ENCODE measurements at regions of chr11 and their contacts with region 1.

Region 1: DNA sequence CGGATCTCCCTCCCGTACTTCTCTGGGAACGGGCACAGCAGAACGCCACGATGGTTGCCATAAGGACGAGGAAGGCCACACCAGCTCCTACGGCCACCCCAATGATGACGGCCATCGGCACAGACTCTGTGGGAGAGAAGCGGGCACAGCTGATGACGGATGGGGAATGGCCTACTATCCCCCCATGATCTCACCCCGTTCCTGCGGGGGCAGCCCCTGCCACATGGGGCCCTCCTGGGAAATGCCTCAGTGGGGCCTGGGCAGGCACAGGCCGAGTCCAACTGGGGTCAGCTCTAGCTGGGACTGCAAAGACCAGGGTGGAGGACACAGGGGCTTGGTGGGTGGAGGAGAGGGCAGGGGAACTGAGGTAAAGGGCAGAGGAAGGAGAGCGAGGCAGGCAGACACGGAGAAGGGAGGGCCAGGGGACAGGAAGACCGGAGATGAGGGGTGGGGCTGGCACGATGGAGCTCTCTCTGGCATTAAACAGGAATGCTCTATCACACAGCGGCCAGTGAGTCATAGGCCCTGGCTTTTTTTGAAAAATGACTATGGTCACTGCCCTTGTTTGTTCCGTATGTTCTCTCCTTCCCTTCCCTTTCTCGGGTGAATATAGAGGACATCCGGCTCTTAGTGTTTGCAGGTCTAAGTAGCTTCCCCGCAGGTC is 76.0 kb downstream of the ST3GAL4 start:
- DNase-seq: peak in 3 of 4 donors; percentile 29 to 44 (median 44)
- ATAC-seq: peak; percentile 63
- H3K4me3 ChIP-seq: no peak overlapping the region
- H3K27ac ChIP-seq: peak overlapping the region in 1 of 4 donors; percentile 12
- H3K4me1 ChIP-seq: no peaks in the 10 kb centered on the region
- H3K27me3 ChIP-seq: no peaks in the 10 kb centered on the region
- CTCF ChIP-seq: no peak
- POLR2A ChIP-seq: no peak

Region 2: GRCh38 chr11:126282736-126283591 is 148.6 kb before region 1 on chr11 and contains the start of gene TIRAP:
- intact Hi-C with region 1: no loop called
- DNase-seq: peak; percentile 70 to 75 (median 73)
- ATAC-seq: peak; percentile 89
- H3K4me3 ChIP-seq: peak within 1 kb of the TSS; percentile 8 to 60
- H3K27ac ChIP-seq: peak within 1 kb of the TSS; percentile 80 to 94 (median 86)
- H3K4me1 ChIP-seq: peaks cover 26% of the 10 kb centered on the region
- H3K27me3 ChIP-seq: no peaks in the 10 kb centered on the region
- CTCF ChIP-seq: peak in 5 of 7 experiments; percentile 7 to 50 (median 36)
- POLR2A ChIP-seq: peak; percentile 70 to 84 (median 80)
- total RNA-seq, gene TIRAP: 8.3 to 13.5 TPM

Region 3: DNA sequence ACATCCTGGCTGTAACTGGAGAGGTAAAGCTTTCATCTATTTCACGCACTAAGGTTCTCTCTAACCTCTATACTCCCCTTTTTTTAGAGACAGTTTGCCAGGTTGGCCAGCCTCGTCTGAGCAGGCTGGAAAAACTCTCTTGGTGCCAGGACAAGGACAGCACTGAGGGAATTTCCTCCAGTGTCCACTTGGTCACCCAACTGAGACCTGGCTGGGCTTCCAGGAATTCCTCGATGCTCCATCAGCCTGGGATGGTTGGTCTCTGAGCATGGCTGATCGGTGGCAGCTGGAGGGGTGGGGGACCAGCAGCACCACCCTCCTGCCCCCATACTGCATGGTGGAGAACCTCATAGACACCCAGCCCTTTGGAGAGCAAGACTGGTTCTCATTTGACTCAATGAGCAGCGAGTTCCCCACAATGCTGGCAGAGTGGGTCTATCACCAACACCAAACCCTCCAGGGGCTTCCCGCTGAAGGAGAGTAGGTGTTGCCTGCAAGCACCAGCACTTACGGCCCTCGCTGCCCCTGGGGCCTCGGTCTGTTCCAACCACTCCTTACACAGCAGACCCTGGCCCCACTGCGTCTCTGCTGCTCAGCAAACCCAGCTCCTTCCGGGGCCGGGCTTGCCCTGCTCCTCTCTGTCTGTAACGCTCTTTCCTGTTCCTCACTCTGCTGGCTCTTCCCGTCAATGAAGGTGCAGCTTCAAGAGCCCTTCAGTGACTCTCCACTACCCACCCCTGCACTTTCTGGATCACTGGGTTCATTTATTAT is 46.2 kb after region 1 on chr11:
- intact Hi-C with region 1: loop called (anchors 5 kb)
- DNase-seq: no peak
- ATAC-seq: no peak
- H3K4me3 ChIP-seq: no peak overlapping the region
- H3K27ac ChIP-seq: no peak overlapping the region
- H3K4me1 ChIP-seq: peaks cover 19% of the 10 kb centered on the region
- H3K27me3 ChIP-seq: no peaks in the 10 kb centered on the region
- CTCF ChIP-seq: no peak
- POLR2A ChIP-seq: no peak

Region 4: GRCh38 chr11:126680131-126680530 is 248.6 kb after region 1 on chr11:
- intact Hi-C with region 1: no loop called
- DNase-seq: no peak
- ATAC-seq: no peak
- H3K4me3 ChIP-seq: no peak overlapping the region
- H3K27ac ChIP-seq: no peak overlapping the region
- H3K4me1 ChIP-seq: no peaks in the 10 kb centered on the region
- H3K27me3 ChIP-seq: no peaks in the 10 kb centered on the region
- CTCF ChIP-seq: no peak
- POLR2A ChIP-seq: no peak

Region 5: GRCh38 chr11:127345819-127346459 is 914.4 kb after region 1 on chr11:
- intact Hi-C with region 1: loop called (anchors 10 kb)
- DNase-seq: peak; percentile 21 to 47 (median 32)
- ATAC-seq: no peak
- H3K4me3 ChIP-seq: no peak overlapping the region
- H3K27ac ChIP-seq: no peak overlapping the region
- H3K4me1 ChIP-seq: no peaks in the 10 kb centered on the region
- H3K27me3 ChIP-seq: no peaks in the 10 kb centered on the region
- CTCF ChIP-seq: peak; percentile 51 to 62 (median 60)
- POLR2A ChIP-seq: no peak